ENCODE measurements at regions of chr6 and their contacts with region 1.

Region 1: DNA sequence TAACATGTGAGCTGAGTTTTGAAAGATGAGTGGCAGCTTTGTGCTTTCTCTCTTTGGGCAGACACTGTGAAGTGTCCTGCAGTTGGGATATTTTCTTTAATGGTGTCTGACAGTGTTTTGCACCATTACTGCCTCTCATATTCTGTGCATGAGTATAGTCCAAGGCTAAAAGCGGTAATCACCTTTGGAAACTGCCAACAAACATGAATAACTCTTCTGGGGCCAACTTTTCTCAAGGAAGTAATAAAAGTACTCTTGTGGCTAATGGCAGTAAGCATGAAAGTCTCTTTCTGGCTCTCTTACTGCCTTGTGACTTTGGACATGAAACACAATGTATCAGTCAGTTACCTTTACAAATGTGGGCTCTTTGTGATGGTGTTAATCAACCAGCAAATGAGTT is 91.7 kb upstream of the SOX4 start:
- DNase-seq: no peak
- ATAC-seq: peak in 2 of 4 donors; percentile 35 to 59
- H3K4me3 ChIP-seq: no peak overlapping the region
- H3K27ac ChIP-seq: peak overlapping the region; percentile 16
- H3K4me1 ChIP-seq: peaks cover 19% of the 10 kb centered on the region
- H3K27me3 ChIP-seq: no peaks in the 10 kb centered on the region
- CTCF ChIP-seq: no peak

Region 2: GRCh38 chr6:21381335-21382217 is 120.2 kb before region 1 on chr6:
- intact Hi-C with region 1: no loop called
- DNase-seq: no peak
- ATAC-seq: no peak
- H3K4me3 ChIP-seq: no peak overlapping the region
- H3K27ac ChIP-seq: no peak overlapping the region
- H3K4me1 ChIP-seq: no peaks in the 10 kb centered on the region
- H3K27me3 ChIP-seq: no peaks in the 10 kb centered on the region
- CTCF ChIP-seq: no peak

Region 3: DNA sequence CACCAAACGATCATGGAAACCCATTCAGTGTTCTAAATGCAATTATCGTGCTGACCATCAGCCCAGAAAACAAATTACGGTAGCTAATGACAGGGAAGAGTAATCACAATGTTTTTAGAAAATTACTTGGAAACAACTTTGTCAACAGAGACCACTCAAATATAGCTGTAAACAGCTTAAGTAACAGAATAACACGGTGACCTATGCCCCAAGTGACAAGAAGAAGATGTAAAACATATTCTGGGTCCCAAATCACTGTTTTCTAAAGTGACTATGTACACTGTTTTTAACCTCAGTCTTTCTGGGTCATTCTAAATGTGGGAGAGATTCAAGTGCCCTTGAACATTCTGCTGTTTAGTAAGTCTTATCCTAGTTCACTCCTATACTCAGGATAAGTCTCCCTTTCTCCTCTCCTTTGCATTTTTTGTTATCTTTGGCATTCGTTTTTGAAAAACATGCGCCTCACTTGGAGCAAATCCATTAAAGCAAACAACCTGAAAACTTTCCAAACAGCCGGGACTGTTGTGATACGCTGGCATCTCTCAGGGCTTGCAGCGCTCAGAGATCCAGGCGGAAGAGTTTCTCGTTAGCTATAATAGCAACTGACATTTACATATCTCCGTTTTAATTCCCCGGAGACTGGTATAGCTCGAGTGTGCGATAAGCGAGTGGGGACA is 22.8 kb before region 1 on chr6:
- intact Hi-C with region 1: loop called in 1 of 2 experiments (anchors 2 kb)
- DNase-seq: no peak
- ATAC-seq: no peak
- H3K4me3 ChIP-seq: peak overlapping the region; percentile 52
- H3K27ac ChIP-seq: no peak overlapping the region
- H3K4me1 ChIP-seq: peaks cover 3% of the 10 kb centered on the region
- H3K27me3 ChIP-seq: no peaks in the 10 kb centered on the region
- CTCF ChIP-seq: no peak

Region 4: GRCh38 chr6:21593412-21593926 is 91.7 kb after region 1 on chr6 and contains the start of gene SOX4:
- intact Hi-C with region 1: no loop called
- DNase-seq: peak; percentile 89 to 92
- ATAC-seq: peak; percentile 70 to 80 (median 77)
- H3K4me3 ChIP-seq: peak within 1 kb of the TSS; percentile 88
- H3K27ac ChIP-seq: peak within 1 kb of the TSS; percentile 84
- H3K4me1 ChIP-seq: peaks cover 13% of the 10 kb centered on the region
- H3K27me3 ChIP-seq: no peaks in the 10 kb centered on the region
- CTCF ChIP-seq: no peak
- total RNA-seq, gene SOX4: 1.9 to 6.9 (median 2.3) TPM

Measured in psoas muscle (tissue), 8 donors.